PC-9 (cell line): ENCODE measurements at regions of chr3 and their contacts with region 1.

Region 1: DNA sequence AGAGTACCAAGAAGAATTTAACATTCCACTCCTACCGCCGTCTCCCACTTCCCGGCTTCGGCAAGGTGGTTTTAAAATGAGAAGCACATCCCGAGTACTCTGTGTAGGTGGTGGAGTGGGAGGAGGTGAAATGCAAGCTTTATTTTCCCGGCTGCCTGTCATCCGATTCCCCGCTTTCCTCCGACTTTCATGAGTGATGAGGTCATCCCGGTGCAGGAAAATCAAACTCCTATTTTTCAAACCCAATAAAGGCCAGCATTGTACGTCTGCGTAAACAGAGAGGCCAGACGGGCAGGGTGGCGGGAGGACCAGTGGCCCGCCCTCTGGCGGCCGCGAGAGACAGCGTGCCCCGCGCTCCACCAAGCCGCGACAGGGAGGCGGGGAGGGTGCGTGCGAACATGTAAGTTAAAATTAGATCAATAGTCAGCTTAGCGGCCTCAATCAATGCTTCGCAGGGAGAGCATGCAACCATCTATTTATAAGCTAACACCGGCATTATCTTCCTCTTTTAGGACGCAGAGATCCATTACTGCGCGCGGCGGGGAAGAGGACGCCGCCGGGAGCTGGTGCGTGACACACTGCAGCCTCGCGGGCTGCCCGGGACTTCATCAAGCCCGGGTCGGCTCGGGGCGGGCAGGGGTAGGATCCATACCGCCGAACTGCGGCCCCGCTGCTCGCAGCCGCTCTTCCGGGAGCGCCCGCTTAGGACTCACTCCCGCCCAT is 163.3 kb downstream of the CD47 start:
- DNase-seq: peak; percentile 74 to 79
- H3K4me3 ChIP-seq: peak overlapping the region; percentile 65
- H3K27ac ChIP-seq: no peak overlapping the region
- H3K4me1 ChIP-seq: no peaks in the 10 kb centered on the region
- H3K27me3 ChIP-seq: no peaks in the 10 kb centered on the region
- CTCF ChIP-seq: peak; percentile 99

Region 2: GRCh38 chr3:107676469-107677309 is 250.8 kb before region 1 on chr3:
- CTCF ChIA-PET with region 1: interaction called, 5 read pairs
- POLR2A ChIA-PET with region 1: no interaction called
- intact Hi-C with region 1: loop called (anchors 5 kb)
- DNase-seq: peak in 1 of 2 experiments; percentile 57
- H3K4me3 ChIP-seq: no peak overlapping the region
- H3K27ac ChIP-seq: no peak overlapping the region
- H3K4me1 ChIP-seq: no peaks in the 10 kb centered on the region
- H3K27me3 ChIP-seq: no peaks in the 10 kb centered on the region
- CTCF ChIP-seq: peak; percentile 86

Region 3: GRCh38 chr3:107846279-107846852 is 81.2 kb before region 1 on chr3:
- CTCF ChIA-PET with region 1: interaction called, 4 read pairs
- POLR2A ChIA-PET with region 1: no interaction called
- intact Hi-C with region 1: loop called (anchors 2 kb)
- DNase-seq: peak in 1 of 2 experiments; percentile 59
- H3K4me3 ChIP-seq: no peak overlapping the region
- H3K27ac ChIP-seq: no peak overlapping the region
- H3K4me1 ChIP-seq: peaks cover 7% of the 10 kb centered on the region; the same call in 1 of the 2 replicates
- H3K27me3 ChIP-seq: no peaks in the 10 kb centered on the region
- CTCF ChIP-seq: peak; percentile 76

Region 4: DNA sequence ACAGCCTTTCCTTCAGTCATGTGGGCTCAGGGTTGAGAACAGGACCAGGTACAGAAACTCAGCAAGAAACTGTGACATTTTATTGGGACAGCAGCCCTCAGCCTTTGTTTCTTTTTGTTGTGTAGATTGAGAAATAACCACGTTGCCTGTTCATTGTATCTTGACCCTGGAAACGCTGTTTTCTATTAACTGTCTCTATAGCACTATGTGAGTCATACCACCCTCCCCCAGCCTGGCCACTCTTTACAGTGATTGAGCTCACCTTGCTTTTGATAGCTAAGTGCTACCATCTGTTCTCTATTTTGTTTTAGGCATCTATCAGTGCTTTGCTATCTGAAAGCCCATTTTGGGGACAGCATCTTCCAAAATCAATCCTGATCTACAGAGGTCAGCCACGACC is 35.4 kb after region 1 on chr3:
- CTCF ChIA-PET with region 1: no interaction called
- POLR2A ChIA-PET with region 1: no interaction called
- intact Hi-C with region 1: no loop called
- DNase-seq: peak; percentile 33 to 62
- H3K4me3 ChIP-seq: no peak overlapping the region
- H3K27ac ChIP-seq: no peak overlapping the region
- H3K4me1 ChIP-seq: peaks cover 13% of the 10 kb centered on the region
- H3K27me3 ChIP-seq: no peaks in the 10 kb centered on the region
- CTCF ChIP-seq: no peak

Region 5: GRCh38 chr3:108006077-108006771 is 78.7 kb after region 1 on chr3:
- CTCF ChIA-PET with region 1: interaction called, 3 read pairs
- POLR2A ChIA-PET with region 1: no interaction called
- intact Hi-C with region 1: loop called (anchors 2 kb)
- DNase-seq: peak; percentile 86 to 92
- H3K4me3 ChIP-seq: peak overlapping the region; percentile 15; the same call in 1 of the 2 replicates
- H3K27ac ChIP-seq: peak overlapping the region; percentile 19; the same call in 1 of the 2 replicates
- H3K4me1 ChIP-seq: peaks cover 42% of the 10 kb centered on the region
- H3K27me3 ChIP-seq: no peaks in the 10 kb centered on the region
- CTCF ChIP-seq: no peak

Region 6: GRCh38 chr3:108301695-108302404 is 374.3 kb after region 1 on chr3:
- CTCF ChIA-PET with region 1: no interaction called
- POLR2A ChIA-PET with region 1: no interaction called
- intact Hi-C with region 1: loop called (anchors 2 kb)
- DNase-seq: peak in 1 of 2 experiments; percentile 46
- H3K4me3 ChIP-seq: no peak overlapping the region
- H3K27ac ChIP-seq: no peak overlapping the region
- H3K4me1 ChIP-seq: no peaks in the 10 kb centered on the region; the same call in 1 of the 2 replicates
- H3K27me3 ChIP-seq: no peaks in the 10 kb centered on the region
- CTCF ChIP-seq: no peak